Activated CD4-positive, alpha-beta memory T cell treated with anti-CD3 and anti-CD28 coated beads for 36 hours (primary cell): ENCODE measurements at regions of chr1 and their contacts with region 1.

Region 1: GRCh38 chr1:91754348-91754747 is 131.6 kb downstream of the TGFBR3 start:
- DNase-seq: peak; percentile 77
- H3K4me3 Mint-ChIP-seq: peak overlapping the region; percentile 2
- H3K27ac Mint-ChIP-seq: peak overlapping the region; percentile 67
- H3K4me1 Mint-ChIP-seq: peaks cover 38% of the 10 kb centered on the region
- H3K27me3 Mint-ChIP-seq: peaks cover 1% of the 10 kb centered on the region

Region 2: DNA sequence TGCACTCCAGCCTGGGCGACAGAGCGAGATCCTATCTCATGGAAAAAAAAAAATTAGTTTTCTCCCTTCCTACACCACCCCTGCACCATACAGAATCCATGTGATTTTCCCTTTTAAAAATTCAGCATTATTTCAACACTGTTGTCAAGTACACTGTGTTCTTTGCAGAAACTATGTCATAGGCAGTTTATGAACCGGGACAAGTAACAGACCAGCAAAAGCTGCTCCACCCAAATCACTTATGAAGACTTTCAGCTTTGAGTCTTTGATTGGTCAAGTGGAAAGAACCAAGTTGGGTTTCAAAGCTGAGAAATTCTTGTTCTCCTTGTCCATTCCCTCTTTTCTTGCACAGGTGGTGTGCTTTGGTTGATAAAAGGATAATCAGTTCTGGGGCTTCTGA is 80.7 kb before region 1 on chr1:
- CTCF ChIA-PET with region 1: no interaction called
- POLR2A ChIA-PET with region 1: no interaction called
- intact Hi-C with region 1: loop called (anchors 1 kb)
- DNase-seq: no peak
- H3K4me3 Mint-ChIP-seq: no peak overlapping the region
- H3K27ac Mint-ChIP-seq: no peak overlapping the region
- H3K4me1 Mint-ChIP-seq: peaks cover 37% of the 10 kb centered on the region
- H3K27me3 Mint-ChIP-seq: no peaks in the 10 kb centered on the region

Region 3: GRCh38 chr1:91712981-91713841 is 41.1 kb before region 1 on chr1:
- CTCF ChIA-PET with region 1: no interaction called
- POLR2A ChIA-PET with region 1: interaction called, 8 read pairs
- intact Hi-C with region 1: loop called (anchors 1 kb)
- DNase-seq: peak; percentile 77
- H3K4me3 Mint-ChIP-seq: peak overlapping the region; percentile 24
- H3K27ac Mint-ChIP-seq: peak overlapping the region; percentile 71
- H3K4me1 Mint-ChIP-seq: peaks cover 25% of the 10 kb centered on the region
- H3K27me3 Mint-ChIP-seq: no peaks in the 10 kb centered on the region

Region 4: GRCh38 chr1:91827087-91827458 is 72.7 kb after region 1 on chr1:
- CTCF ChIA-PET with region 1: no interaction called
- POLR2A ChIA-PET with region 1: no interaction called
- intact Hi-C with region 1: no loop called
- DNase-seq: peak; percentile 42
- H3K4me3 Mint-ChIP-seq: no peak overlapping the region
- H3K27ac Mint-ChIP-seq: no peak overlapping the region
- H3K4me1 Mint-ChIP-seq: peaks cover 23% of the 10 kb centered on the region
- H3K27me3 Mint-ChIP-seq: no peaks in the 10 kb centered on the region

Region 5: DNA sequence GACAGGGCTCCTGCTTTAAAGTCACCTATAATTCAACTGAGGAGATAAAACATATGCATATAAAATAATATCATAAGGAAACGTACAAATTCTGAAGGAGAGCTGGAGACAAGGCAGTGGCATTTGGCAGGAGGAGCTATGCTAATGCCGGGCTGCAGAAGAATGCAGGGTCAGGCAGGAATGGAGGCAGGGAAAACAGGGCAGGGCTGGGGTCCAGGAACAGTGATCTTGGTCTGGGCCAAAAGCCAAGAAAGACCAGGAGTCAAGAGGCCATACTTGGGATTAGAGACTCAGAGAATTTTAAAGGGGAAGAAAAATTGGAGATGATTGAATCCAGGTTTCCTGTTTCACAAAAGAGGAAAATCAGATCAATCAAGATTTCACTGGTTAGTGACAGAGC is 174.9 kb after region 1 on chr1:
- CTCF ChIA-PET with region 1: interaction called, 3 read pairs
- POLR2A ChIA-PET with region 1: no interaction called
- intact Hi-C with region 1: loop called (anchors 5 kb)
- DNase-seq: no peak
- H3K4me3 Mint-ChIP-seq: no peak overlapping the region
- H3K27ac Mint-ChIP-seq: no peak overlapping the region
- H3K4me1 Mint-ChIP-seq: peaks cover under 1% of the 10 kb centered on the region
- H3K27me3 Mint-ChIP-seq: no peaks in the 10 kb centered on the region